Aorta (tissue), 5 donors: ENCODE measurements at regions of chr1 and their contacts with region 1.

Region 1: GRCh38 chr1:207321079-207321789 is at the start of gene CD55:
- DNase-seq: peak; percentile 96 to 97
- ATAC-seq: peak; percentile 98
- H3K4me3 ChIP-seq: peak within 1 kb of the TSS; percentile 88 to 98
- H3K27ac ChIP-seq: peak within 1 kb of the TSS in 1 of 2 donors; percentile 70
- H3K4me1 ChIP-seq: no peaks in the 10 kb centered on the region
- H3K27me3 ChIP-seq: no peaks in the 10 kb centered on the region
- total RNA-seq, gene CD55: 84.8 to 86.7 TPM

Region 2: GRCh38 chr1:207288315-207288714 is 32.9 kb before region 1 on chr1:
- intact Hi-C with region 1: loop called in 1 of 2 experiments (anchors 1 kb)
- DNase-seq: no peak
- ATAC-seq: no peak
- H3K4me3 ChIP-seq: no peak overlapping the region
- H3K27ac ChIP-seq: no peak overlapping the region
- H3K4me1 ChIP-seq: peaks cover 0 to 8% of the 10 kb centered on the region in 2 donors
- H3K27me3 ChIP-seq: no peaks in the 10 kb centered on the region